CD4-positive, alpha-beta T cell (primary cell): ENCODE measurements at regions of chr6 and their contacts with region 1.

Region 1: DNA sequence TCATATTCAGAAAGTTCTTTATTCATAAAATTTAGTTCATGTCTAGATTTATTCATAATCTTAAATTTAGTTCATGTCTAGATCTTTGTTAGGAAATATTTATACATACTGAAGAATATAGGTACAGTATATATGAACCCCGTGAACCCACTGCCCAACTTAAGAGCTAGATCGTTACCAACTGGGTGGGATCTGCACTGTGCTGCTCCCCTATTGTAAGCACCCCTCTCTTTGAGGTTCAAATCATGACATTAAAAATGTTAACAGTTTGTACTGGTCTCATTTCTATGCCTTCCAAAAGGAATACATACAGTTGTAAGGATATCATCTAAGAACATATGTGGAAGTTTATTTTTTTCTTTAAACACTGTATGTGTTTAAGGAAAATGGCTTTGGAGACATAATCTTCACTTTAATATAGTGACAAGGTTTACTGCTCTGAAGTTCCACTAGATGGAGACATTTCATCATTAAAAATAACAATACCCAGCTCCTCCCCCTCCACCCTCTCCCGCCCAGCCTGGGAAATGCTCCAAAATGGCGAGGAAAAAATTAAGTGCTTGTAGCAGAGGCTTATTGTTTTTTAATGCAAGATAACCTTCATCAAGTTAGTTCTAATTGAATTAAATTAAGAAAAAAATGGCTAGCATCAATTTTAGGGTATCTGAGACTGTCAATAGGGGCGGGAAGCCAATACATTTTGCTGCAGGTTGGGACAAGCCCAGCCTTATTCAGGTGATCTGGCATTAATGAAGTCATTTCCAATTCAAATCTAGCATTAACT is 104.1 kb upstream of the TRAF3IP2 start:
- DNase-seq: peak; percentile 21 to 85 (median 52)
- ATAC-seq: peak; percentile 80
- H3K4me3 ChIP-seq: no peak overlapping the region
- H3K4me3 Mint-ChIP-seq: peak overlapping the region; percentile 67
- H3K27ac ChIP-seq: no peak overlapping the region
- H3K27ac Mint-ChIP-seq: peak overlapping the region; percentile 93
- H3K4me1 ChIP-seq: peaks cover 41% of the 10 kb centered on the region
- H3K4me1 Mint-ChIP-seq: peaks cover 64% of the 10 kb centered on the region
- H3K27me3 ChIP-seq: no peaks in the 10 kb centered on the region
- H3K27me3 Mint-ChIP-seq: no peaks in the 10 kb centered on the region
- CTCF ChIP-seq: peak; percentile 80

Region 2: GRCh38 chr6:111750753-111751684 is 41.2 kb after region 1 on chr6:
- CTCF ChIA-PET with region 1: interaction called, 3 read pairs
- POLR2A ChIA-PET with region 1: interaction called, 9 read pairs
- intact Hi-C with region 1: loop called in 1 of 2 experiments (anchors 5 kb)
- DNase-seq: peak; percentile 35 to 93 (median 52)
- ATAC-seq: peak; percentile 78
- H3K4me3 ChIP-seq: peak overlapping the region; percentile 14
- H3K4me3 Mint-ChIP-seq: peak overlapping the region; percentile 65
- H3K27ac ChIP-seq: peak overlapping the region; percentile 77 to 93
- H3K27ac Mint-ChIP-seq: peak overlapping the region; percentile 99
- H3K4me1 ChIP-seq: peaks cover 69% of the 10 kb centered on the region
- H3K4me1 Mint-ChIP-seq: peaks cover 98% of the 10 kb centered on the region
- H3K27me3 ChIP-seq: no peaks in the 10 kb centered on the region
- H3K27me3 Mint-ChIP-seq: no peaks in the 10 kb centered on the region
- CTCF ChIP-seq: no peak

Region 3: GRCh38 chr6:111804627-111805235 is 94.9 kb after region 1 on chr6:
- CTCF ChIA-PET with region 1: interaction called, 11 read pairs
- POLR2A ChIA-PET with region 1: interaction called, 6 read pairs
- intact Hi-C with region 1: loop called (anchors 2 to 5 kb)
- DNase-seq: peak; percentile 38 to 91 (median 54)
- ATAC-seq: peak; percentile 71
- H3K4me3 ChIP-seq: peak overlapping the region; percentile 15
- H3K4me3 Mint-ChIP-seq: peak overlapping the region; percentile 67
- H3K27ac ChIP-seq: peak overlapping the region; percentile 55 to 66
- H3K27ac Mint-ChIP-seq: peak overlapping the region; percentile 91
- H3K4me1 ChIP-seq: peaks cover 77% of the 10 kb centered on the region
- H3K4me1 Mint-ChIP-seq: peaks cover 93% of the 10 kb centered on the region
- H3K27me3 ChIP-seq: no peaks in the 10 kb centered on the region
- H3K27me3 Mint-ChIP-seq: no peaks in the 10 kb centered on the region
- CTCF ChIP-seq: no peak

Region 4: DNA sequence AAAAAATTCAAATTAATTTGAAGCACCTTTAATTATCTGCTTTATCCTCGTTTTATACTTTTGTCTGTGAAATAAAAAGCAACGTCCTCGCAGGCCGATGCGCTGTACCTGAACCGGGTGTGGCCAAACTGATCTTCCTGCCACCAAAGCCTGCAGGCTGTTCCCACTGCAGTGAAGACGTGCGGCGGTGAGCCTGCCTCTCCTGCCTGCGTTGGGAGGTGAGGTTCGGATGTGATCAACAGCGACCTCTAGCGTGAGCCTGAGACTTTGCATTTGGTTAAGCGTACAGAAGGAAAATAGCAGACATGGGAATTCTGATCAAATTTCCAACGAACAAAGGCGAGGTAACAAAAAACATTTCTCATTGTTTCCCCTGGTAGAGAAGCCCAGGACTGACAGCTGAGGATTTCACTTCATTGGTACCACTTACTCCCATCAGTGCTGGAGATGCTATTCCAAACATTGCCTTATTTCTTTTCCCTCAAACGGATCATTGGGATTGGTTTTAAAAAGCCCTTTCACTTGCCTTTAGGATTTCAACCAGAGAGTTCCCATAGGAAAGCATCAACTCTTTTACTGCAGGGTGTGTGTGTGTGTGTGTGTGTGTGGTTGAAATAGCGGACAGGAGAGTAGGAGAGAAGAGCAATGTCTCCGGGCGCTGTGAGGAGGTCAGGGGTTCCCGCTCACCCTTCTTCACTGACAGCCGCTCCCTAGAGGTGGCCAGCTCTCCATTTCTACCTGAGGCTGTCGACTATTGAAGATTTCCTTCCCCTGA is 287.5 kb after region 1 on chr6:
- CTCF ChIA-PET with region 1: interaction called, 6 read pairs
- POLR2A ChIA-PET with region 1: interaction called, 10 read pairs
- intact Hi-C with region 1: loop called (anchors 1 kb)
- DNase-seq: peak; percentile 61 to 92 (median 76)
- ATAC-seq: peak; percentile 70
- H3K4me3 ChIP-seq: peak overlapping the region; percentile 8
- H3K4me3 Mint-ChIP-seq: peak overlapping the region; percentile 75
- H3K27ac ChIP-seq: no peak overlapping the region
- H3K27ac Mint-ChIP-seq: peak overlapping the region; percentile 82
- H3K4me1 ChIP-seq: peaks cover 40% of the 10 kb centered on the region
- H3K4me1 Mint-ChIP-seq: peaks cover 55% of the 10 kb centered on the region
- H3K27me3 ChIP-seq: no peaks in the 10 kb centered on the region
- H3K27me3 Mint-ChIP-seq: no peaks in the 10 kb centered on the region
- CTCF ChIP-seq: peak; percentile 93

Region 5: DNA sequence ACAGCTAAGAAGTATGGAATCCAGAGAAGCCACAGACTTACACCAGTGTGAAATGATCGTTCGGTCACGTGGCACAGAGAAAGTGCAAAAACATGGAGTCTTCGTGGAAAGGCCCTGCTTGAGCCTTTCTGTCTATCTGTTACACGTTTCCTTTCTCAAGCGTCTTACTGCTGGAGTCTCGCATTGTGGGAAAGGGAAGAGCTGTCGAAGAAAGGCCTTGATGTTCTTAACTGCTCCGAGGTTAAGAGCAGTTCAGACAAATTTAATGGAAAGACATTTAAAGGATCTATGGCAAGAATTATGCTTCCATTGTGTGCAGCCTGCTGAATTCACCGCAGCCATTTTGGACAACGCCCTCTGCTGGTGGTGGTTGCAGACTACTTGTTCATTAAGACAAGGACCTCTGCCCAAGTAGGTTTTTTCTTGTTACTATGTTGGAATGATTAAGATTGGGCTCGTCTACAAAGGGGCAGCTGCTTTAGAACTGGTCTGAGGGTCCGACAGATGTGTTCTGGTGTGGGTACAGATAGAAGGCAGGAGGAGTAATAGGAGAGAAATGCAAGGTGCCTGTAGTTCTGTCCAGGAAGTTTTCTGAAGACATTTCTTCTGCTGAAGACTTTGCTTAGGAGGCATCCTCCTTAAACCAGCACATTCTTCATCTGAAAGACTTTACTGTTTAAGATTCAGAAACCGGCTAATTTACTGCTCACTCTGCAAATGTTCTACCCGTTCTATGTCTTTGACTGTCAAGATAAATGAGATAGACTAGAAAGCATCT is 319.4 kb after region 1 on chr6:
- CTCF ChIA-PET with region 1: no interaction called
- POLR2A ChIA-PET with region 1: interaction called, 11 read pairs
- intact Hi-C with region 1: no loop called
- DNase-seq: peak; percentile 41 to 82 (median 55)
- ATAC-seq: no peak
- H3K4me3 ChIP-seq: no peak overlapping the region
- H3K4me3 Mint-ChIP-seq: peak overlapping the region; percentile 62
- H3K27ac ChIP-seq: peak overlapping the region; percentile 62 to 92
- H3K27ac Mint-ChIP-seq: peak overlapping the region; percentile 93
- H3K4me1 ChIP-seq: peaks cover 62% of the 10 kb centered on the region
- H3K4me1 Mint-ChIP-seq: peaks cover 83% of the 10 kb centered on the region
- H3K27me3 ChIP-seq: no peaks in the 10 kb centered on the region
- H3K27me3 Mint-ChIP-seq: no peaks in the 10 kb centered on the region
- CTCF ChIP-seq: peak; percentile 61

Region 6: DNA sequence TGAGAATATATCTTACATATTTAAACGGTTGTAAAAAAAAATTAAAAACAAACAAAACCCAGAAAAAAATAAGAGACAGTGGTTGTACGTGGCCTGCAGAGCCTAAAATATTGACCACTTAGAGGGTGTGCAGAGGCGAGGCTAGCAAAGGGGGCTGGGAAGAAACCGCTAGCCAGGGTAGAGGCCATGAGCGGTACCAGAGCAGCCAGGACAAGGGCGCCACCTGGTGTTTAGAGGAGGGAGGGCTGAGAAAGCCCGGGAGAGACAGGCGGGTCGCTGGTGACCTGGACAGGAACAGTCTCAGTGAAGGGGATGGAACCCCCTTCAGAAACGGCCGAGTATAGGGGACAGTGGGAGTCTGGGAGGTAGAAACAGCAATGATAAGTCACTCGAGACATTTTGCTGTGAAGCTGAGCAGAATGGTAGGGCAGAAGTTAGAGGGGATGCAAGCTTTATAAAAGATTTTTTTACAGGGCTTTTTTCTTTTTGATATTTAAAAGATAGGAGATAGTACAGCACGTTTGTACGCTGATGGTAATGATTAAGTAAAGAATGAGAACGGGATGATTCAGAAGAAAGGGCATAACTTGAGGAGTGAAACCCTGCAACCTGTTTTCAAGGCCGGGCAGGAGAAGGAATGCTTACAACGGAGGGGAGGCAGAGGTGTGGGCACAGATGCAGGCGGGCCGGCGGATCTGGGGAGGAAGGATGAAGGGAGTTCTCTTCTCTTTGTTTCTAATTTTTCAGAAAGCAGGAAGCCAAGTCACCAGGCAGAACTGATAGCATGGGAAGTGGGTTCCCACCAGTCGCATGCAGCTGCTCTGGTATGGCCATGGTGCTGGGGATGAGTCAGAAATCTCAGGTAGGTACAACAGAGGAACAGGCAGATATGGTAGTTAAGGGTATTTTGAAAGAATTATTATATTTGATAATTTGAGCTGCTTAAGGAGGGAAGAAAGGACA is 453.8 kb after region 1 on chr6:
- CTCF ChIA-PET with region 1: no interaction called
- POLR2A ChIA-PET with region 1: no interaction called
- intact Hi-C with region 1: loop called (anchors 1 to 10 kb)
- DNase-seq: peak; percentile 56 to 83 (median 68)
- ATAC-seq: peak; percentile 97
- H3K4me3 ChIP-seq: no peak overlapping the region
- H3K4me3 Mint-ChIP-seq: peak overlapping the region; percentile 35
- H3K27ac ChIP-seq: no peak overlapping the region
- H3K27ac Mint-ChIP-seq: no peak overlapping the region
- H3K4me1 ChIP-seq: peaks cover 10% of the 10 kb centered on the region
- H3K4me1 Mint-ChIP-seq: peaks cover 12% of the 10 kb centered on the region
- H3K27me3 ChIP-seq: peaks cover 0 to 11% of the 10 kb centered on the region in 2 experiments
- H3K27me3 Mint-ChIP-seq: peaks cover 32% of the 10 kb centered on the region
- CTCF ChIP-seq: peak; percentile 87